Esophagus muscularis mucosa (tissue), 4 donors: ENCODE measurements at regions of chr7 and their contacts with region 1.

Region 1: GRCh38 chr7:31948029-31948428 is 122.2 kb downstream of the PDE1C start:
- DNase-seq: no peak
- H3K4me3 ChIP-seq: no peak overlapping the region
- H3K27ac ChIP-seq: peak overlapping the region; percentile 51 to 60 (median 54)
- H3K4me1 ChIP-seq: peaks cover 6 to 21% (median 12%) of the 10 kb centered on the region in 4 donors
- H3K27me3 ChIP-seq: no peaks in the 10 kb centered on the region
- CTCF ChIP-seq: no peak
- EP300 ChIP-seq: no peak
- POLR2A ChIP-seq: no peak

Region 2: GRCh38 chr7:31885171-31885570 is 62.9 kb before region 1 on chr7:
- intact Hi-C with region 1: loop called (anchors 5 kb)
- DNase-seq: no peak
- H3K4me3 ChIP-seq: no peak overlapping the region
- H3K27ac ChIP-seq: peak overlapping the region; percentile 77 to 86 (median 82)
- H3K4me1 ChIP-seq: peaks cover 52 to 56% (median 53%) of the 10 kb centered on the region in 4 donors
- H3K27me3 ChIP-seq: no peaks in the 10 kb centered on the region
- CTCF ChIP-seq: no peak
- EP300 ChIP-seq: no peak
- POLR2A ChIP-seq: no peak

Region 3: GRCh38 chr7:32062150-32062549 is 114.1 kb after region 1 on chr7:
- intact Hi-C with region 1: loop called (anchors 5 kb)
- DNase-seq: no peak
- H3K4me3 ChIP-seq: no peak overlapping the region
- H3K27ac ChIP-seq: peak overlapping the region in 1 of 4 donors; percentile 6
- H3K4me1 ChIP-seq: peaks cover 38 to 53% (median 51%) of the 10 kb centered on the region in 4 donors
- H3K27me3 ChIP-seq: no peaks in the 10 kb centered on the region
- CTCF ChIP-seq: peak in 2 of 3 experiments; percentile 20 to 46
- EP300 ChIP-seq: no peak
- POLR2A ChIP-seq: no peak